ENCODE measurements at regions of chrX and their contacts with region 1.

Region 1: GRCh38 chrX:97446298-97446882 is 562.7 kb downstream of the RPA4 start:
- DNase-seq: peak; percentile 9
- H3K4me3 ChIP-seq: no peak overlapping the region
- H3K27ac ChIP-seq: no peak overlapping the region
- H3K4me1 ChIP-seq: no peaks in the 10 kb centered on the region
- H3K27me3 ChIP-seq: no peaks in the 10 kb centered on the region
- CTCF ChIP-seq: peak in 1 of 2 donors; percentile 2
- POLR2A ChIP-seq: no peak

Region 2: DNA sequence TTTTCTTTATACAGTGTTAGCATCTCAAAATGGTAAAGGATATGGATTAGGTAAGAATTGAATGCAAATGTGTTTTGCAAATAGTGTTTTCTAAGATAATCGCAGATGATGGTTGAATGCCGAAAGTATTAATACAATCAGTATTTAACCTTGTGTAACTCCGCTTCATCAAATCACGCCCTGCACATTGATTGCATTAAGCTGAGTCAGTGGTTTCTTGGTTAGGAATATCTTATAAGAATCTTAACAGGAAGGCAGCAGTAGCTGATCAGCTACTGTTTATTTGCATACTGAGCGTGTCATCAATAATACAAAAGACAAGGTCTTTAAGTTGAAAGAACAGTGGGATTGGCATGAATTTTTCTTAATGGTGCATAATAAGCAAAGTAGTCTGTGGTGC is 17.3 kb before region 1 on chrX:
- CTCF ChIA-PET with region 1: no interaction called
- POLR2A ChIA-PET with region 1: no interaction called
- dilution Hi-C with region 1: no loop called
- intact Hi-C with region 1: no loop called
- DNase-seq: no peak
- H3K4me3 ChIP-seq: no peak overlapping the region
- H3K27ac ChIP-seq: no peak overlapping the region
- H3K4me1 ChIP-seq: no peaks in the 10 kb centered on the region
- H3K27me3 ChIP-seq: no peaks in the 10 kb centered on the region
- CTCF ChIP-seq: no peak
- POLR2A ChIP-seq: no peak

Region 3: DNA sequence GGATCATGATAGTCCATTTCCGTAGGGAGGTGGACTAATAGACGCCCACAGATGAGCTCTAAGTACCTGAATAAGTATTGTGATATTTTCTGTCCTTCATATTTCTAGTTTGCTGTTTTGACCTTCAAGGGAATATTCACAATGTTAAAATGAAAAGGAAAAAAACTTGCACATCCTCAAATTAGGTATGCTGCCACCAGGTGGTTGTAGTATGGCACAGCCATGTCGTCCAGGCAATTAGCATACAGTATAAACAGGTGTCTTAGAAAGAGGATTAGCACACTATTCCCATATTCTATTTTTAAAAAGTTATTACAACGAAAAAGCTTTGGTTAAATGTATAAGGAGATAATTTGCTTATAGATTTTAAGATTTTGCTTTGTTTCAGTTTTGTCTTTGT is 239.4 kb after region 1 on chrX:
- CTCF ChIA-PET with region 1: interaction called, 7 read pairs
- POLR2A ChIA-PET with region 1: no interaction called
- dilution Hi-C with region 1: no loop called
- intact Hi-C with region 1: loop called (anchors 5 kb)
- DNase-seq: peak; percentile 47
- H3K4me3 ChIP-seq: no peak overlapping the region
- H3K27ac ChIP-seq: no peak overlapping the region
- H3K4me1 ChIP-seq: no peaks in the 10 kb centered on the region
- H3K27me3 ChIP-seq: no peaks in the 10 kb centered on the region
- CTCF ChIP-seq: peak; percentile 32 to 48
- POLR2A ChIP-seq: no peak